ENCODE measurements at regions of chr5 and their contacts with region 1.

Region 1: DNA sequence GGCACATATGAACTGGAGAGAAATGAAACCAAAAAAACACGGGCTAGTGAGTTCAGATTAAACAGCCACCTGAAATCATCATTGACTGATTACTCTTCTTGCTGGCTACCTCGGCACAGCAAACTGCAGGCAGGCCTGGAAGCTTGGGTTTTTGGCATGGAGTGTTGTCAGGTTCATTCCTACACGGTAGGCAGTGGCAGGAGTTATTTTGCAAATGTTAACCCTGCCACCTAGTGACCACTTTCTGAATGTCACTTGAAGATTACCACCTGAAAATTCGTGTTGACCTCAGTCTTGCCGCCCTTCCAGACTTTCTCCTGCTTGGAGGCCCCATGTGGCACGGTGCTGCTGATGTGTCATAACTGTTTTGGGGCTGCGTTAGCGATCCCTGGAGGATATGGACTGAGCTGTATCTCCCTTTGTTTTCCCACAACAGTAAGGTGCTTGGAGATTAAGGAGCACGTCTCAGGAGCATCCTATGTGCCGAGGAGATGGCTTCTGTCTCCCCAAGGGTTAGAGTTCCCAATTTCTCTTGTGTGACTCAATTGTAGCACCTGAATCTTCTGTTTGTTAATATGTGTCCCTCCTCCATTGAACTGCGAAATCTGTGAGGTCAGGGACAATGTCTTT is 12.7 kb upstream of the CD180 start:
- DNase-seq: peak; percentile 57 to 83 (median 75)
- ATAC-seq: peak; percentile 98 to 99 (median 98)
- H3K4me3 ChIP-seq: no peak overlapping the region
- H3K27ac ChIP-seq: no peak overlapping the region
- H3K4me1 ChIP-seq: no peaks in the 10 kb centered on the region
- H3K27me3 ChIP-seq: no peaks in the 10 kb centered on the region
- CTCF ChIP-seq: peak; percentile 74 to 87 (median 82)
- POLR2A ChIP-seq: no peak

Region 2: GRCh38 chr5:66828548-66829357 is 380.5 kb before region 1 on chr5:
- intact Hi-C with region 1: no loop called
- DNase-seq: peak in 2 of 3 donors; percentile 51 to 58
- ATAC-seq: peak; percentile 86 to 93 (median 91)
- H3K4me3 ChIP-seq: peak overlapping the region; percentile 7 to 43 (median 9)
- H3K27ac ChIP-seq: peak overlapping the region in 2 of 3 donors; percentile 3 to 16
- H3K4me1 ChIP-seq: no peaks in the 10 kb centered on the region
- H3K27me3 ChIP-seq: no peaks in the 10 kb centered on the region
- CTCF ChIP-seq: no peak
- POLR2A ChIP-seq: no peak

Region 3: GRCh38 chr5:67156976-67157583 is 52.2 kb before region 1 on chr5:
- intact Hi-C with region 1: loop called in 1 of 2 experiments (anchors 10 kb)
- DNase-seq: peak in 1 of 3 donors; percentile 25
- ATAC-seq: peak; percentile 68 to 75 (median 70)
- H3K4me3 ChIP-seq: no peak overlapping the region
- H3K27ac ChIP-seq: no peak overlapping the region
- H3K4me1 ChIP-seq: peaks cover 0 to 10% (median 0%) of the 10 kb centered on the region in 4 donors
- H3K27me3 ChIP-seq: no peaks in the 10 kb centered on the region
- CTCF ChIP-seq: peak; percentile 76 to 83 (median 81)
- POLR2A ChIP-seq: no peak